ENCODE measurements at regions of chrX and their contacts with region 1.

Region 1: DNA sequence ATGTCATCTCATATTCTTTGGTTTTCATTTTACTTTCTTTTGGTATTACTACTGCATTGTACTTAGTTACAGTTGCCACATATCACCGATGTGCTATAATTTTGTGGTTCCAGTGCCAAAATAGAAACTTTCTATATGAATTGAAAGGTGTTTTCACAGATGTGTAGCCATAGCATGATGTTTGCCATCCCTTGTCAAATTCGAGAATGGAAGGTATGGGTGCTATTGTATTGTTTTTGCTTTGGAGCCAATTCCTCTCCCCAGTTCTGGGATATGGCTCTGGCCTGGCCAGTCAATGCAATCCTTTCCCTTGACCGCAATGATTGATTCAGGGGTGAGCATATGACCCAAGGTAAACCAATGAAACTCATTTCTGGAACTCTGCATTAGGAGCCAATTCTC is 86.2 kb upstream of the RPS6KA3 start:
- DNase-seq: peak; percentile 8
- ATAC-seq: peak; percentile 72
- H3K4me3 Mint-ChIP-seq: no peak overlapping the region
- H3K27ac Mint-ChIP-seq: no peak overlapping the region
- H3K4me1 Mint-ChIP-seq: peaks cover 26% of the 10 kb centered on the region
- H3K27me3 Mint-ChIP-seq: peaks cover 4% of the 10 kb centered on the region

Region 2: GRCh38 chrX:19964017-19964710 is 388.8 kb before region 1 on chrX:
- CTCF ChIA-PET with region 1: no interaction called
- POLR2A ChIA-PET with region 1: no interaction called
- intact Hi-C with region 1: no loop called
- DNase-seq: peak; percentile 72
- ATAC-seq: peak; percentile 96
- H3K4me3 Mint-ChIP-seq: no peak overlapping the region
- H3K27ac Mint-ChIP-seq: no peak overlapping the region
- H3K4me1 Mint-ChIP-seq: peaks cover 22% of the 10 kb centered on the region
- H3K27me3 Mint-ChIP-seq: no peaks in the 10 kb centered on the region

Region 3: GRCh38 chrX:20266810-20267606 is 85.9 kb before region 1 on chrX and contains the start of gene RPS6KA3:
- CTCF ChIA-PET with region 1: no interaction called
- POLR2A ChIA-PET with region 1: no interaction called
- intact Hi-C with region 1: loop called in 1 of 2 experiments (anchors 2 kb)
- DNase-seq: peak; percentile 94
- ATAC-seq: peak; percentile 83
- H3K4me3 Mint-ChIP-seq: peak within 1 kb of the TSS; percentile 82
- H3K27ac Mint-ChIP-seq: peak within 1 kb of the TSS; percentile 91
- H3K4me1 Mint-ChIP-seq: peaks cover 18% of the 10 kb centered on the region
- H3K27me3 Mint-ChIP-seq: no peaks in the 10 kb centered on the region
- total RNA-seq, gene RPS6KA3: 40.7 to 41.5 TPM

Measured in activated CD4-positive, alpha-beta T cell treated with anti-CD3 and anti-CD28 coated beads for 36 hours (primary cell).